WTC11 (cell line): ENCODE measurements at regions of chr5 and their contacts with region 1.

Region 1: GRCh38 chr5:163347671-163348070 is 89.7 kb upstream of the CCNG1 start:
- DNase-seq: peak; percentile 72
- ATAC-seq: peak; percentile 78
- H3K4me3 Mint-ChIP-seq: no peak overlapping the region
- H3K27ac Mint-ChIP-seq: no peak overlapping the region
- H3K4me1 Mint-ChIP-seq: peaks cover 23% of the 10 kb centered on the region
- H3K27me3 Mint-ChIP-seq: no peaks in the 10 kb centered on the region
- CTCF ChIP-seq: peak; percentile 81

Region 2: DNA sequence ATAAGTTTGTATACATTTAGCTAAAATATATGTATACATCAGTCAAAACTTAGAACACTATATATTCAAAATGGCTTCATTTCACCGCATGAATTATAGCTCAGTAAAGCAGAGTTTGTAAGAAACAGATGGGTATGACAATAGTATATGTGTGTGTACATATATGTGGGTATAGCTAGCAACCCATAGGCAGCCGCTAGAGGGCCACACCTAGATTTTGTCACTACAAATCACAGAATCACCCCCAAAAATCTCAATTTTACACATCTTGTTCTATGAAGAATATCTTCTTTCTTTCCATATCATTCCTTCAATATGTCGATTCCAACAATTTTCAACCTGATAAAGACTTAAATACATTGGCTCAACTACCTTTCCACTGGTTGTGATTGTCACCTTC is 268.1 kb before region 1 on chr5:
- CTCF ChIA-PET with region 1: interaction called, 13 read pairs
- POLR2A ChIA-PET with region 1: no interaction called
- DNase-seq: peak; percentile 41
- ATAC-seq: no peak
- H3K4me3 Mint-ChIP-seq: no peak overlapping the region
- H3K27ac Mint-ChIP-seq: no peak overlapping the region
- H3K4me1 Mint-ChIP-seq: no peaks in the 10 kb centered on the region
- H3K27me3 Mint-ChIP-seq: no peaks in the 10 kb centered on the region
- CTCF ChIP-seq: peak; percentile 42

Region 3: GRCh38 chr5:163104464-163104863 is 243.2 kb before region 1 on chr5:
- CTCF ChIA-PET with region 1: interaction called, 17 read pairs
- POLR2A ChIA-PET with region 1: no interaction called
- DNase-seq: peak; percentile 69
- ATAC-seq: peak; percentile 93
- H3K4me3 Mint-ChIP-seq: no peak overlapping the region
- H3K27ac Mint-ChIP-seq: no peak overlapping the region
- H3K4me1 Mint-ChIP-seq: peaks cover 21% of the 10 kb centered on the region
- H3K27me3 Mint-ChIP-seq: no peaks in the 10 kb centered on the region
- CTCF ChIP-seq: peak; percentile 37; the same call in 1 of the 2 replicates

Region 4: GRCh38 chr5:163306421-163306820 is 41.2 kb before region 1 on chr5:
- CTCF ChIA-PET with region 1: interaction called, 34 read pairs
- POLR2A ChIA-PET with region 1: no interaction called
- DNase-seq: no peak
- ATAC-seq: peak; percentile 71; the same call in 1 of the 2 replicates
- H3K4me3 Mint-ChIP-seq: no peak overlapping the region
- H3K27ac Mint-ChIP-seq: no peak overlapping the region
- H3K4me1 Mint-ChIP-seq: peaks cover 7% of the 10 kb centered on the region
- H3K27me3 Mint-ChIP-seq: no peaks in the 10 kb centered on the region
- CTCF ChIP-seq: no peak

Region 5: DNA sequence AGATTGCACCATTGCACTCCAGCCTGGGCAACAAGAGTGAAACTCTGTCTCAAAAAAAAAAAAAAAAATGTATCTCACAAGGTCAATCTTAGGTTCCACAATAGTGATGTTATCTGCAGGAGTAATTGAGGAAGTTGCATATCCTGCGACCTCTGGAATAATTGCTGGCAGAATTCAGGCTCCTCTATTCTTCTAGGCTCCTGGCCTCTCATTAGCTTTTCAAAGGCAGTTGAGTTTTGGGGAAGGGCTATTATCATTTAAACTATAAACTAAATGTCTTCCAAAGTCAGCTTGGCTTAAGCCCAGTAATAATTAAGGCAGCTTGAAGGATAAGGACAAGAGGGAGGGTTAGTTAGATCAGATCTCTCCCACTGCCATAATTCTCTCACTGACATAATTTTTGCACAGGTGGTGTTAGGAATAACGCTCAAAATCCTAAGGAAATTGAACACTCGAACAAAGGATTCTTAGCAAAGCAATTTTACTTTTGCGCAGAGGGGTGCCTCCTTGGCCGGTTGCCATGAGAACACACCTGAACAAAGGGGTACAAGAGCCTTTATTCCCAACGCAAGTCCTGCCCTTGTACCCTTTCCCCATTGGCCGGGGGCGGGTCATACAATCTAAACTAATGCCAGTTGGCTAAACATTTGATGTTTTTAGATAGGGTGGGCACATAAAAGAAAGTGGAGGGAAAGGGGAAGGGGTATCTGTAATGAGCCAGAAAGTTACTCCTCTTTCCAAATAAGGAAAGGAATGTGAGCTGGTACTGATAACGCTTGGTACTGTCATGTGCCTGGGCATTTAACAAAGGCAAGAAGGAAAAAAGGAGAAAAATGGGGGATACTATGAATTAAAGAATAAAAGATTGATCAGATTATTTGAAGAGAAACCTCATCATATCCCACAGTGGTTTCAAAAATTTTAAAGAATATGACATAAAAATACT is 16.7 kb before region 1 on chr5:
- CTCF ChIA-PET with region 1: interaction called, 12 read pairs
- POLR2A ChIA-PET with region 1: no interaction called
- DNase-seq: peak; percentile 24
- ATAC-seq: peak; percentile 84
- H3K4me3 Mint-ChIP-seq: peak overlapping the region; percentile 38
- H3K27ac Mint-ChIP-seq: peak overlapping the region; percentile 80
- H3K4me1 Mint-ChIP-seq: peaks cover 74% of the 10 kb centered on the region
- H3K27me3 Mint-ChIP-seq: peaks cover 3% of the 10 kb centered on the region
- CTCF ChIP-seq: no peak